Activated CD4-positive, alpha-beta T cell treated with anti-CD3 and anti-CD28 coated beads for 36 hours (primary cell): ENCODE measurements at regions of chr16 and their contacts with region 1.

Region 1: DNA sequence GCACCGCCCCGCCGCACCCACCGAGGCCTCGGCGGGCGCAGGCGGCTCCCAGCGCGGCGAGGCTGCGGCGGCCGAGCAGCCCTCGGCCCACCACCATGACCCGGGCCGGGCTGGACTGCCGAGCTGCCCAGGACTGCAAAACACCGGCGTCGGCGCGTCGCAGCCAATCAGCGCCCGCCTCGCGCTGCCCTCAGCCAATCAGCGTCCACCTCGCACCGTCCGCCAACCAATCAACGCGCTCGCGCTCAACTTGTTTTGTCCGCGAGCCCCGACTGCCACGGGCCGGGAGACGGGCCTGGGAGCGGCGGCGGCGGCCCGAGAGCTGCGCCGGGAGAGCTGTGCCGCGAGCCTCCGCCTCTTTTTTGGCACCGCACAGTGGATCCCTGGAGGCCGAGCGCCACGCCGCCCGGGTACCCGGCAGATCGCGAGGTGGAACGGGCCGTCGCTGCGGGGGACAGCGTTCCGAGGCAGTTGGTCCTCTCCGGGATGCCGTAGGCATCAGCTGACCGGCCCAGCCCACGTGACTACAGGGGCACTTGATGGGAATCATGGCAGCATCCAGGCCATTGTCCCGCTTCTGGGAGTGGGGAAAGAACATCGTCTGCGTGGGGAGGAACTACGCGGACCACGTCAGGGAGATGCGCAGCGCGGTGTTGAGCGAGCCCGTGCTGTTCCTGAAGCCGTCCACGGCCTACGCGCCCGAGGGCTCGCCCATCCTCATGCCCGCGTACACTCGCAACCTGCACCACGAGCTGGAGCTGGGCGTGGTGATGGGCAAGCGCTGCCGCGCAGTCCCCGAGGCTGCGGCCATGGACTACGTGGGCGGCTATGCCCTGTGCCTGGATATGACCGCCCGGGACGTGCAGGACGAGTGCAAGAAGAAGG is at the starts of genes FAHD1 and HAGH:
- DNase-seq: peak; percentile 93
- ATAC-seq: peak; percentile 90
- H3K4me3 Mint-ChIP-seq: peak within 1 kb of the TSS; percentile 91
- H3K27ac Mint-ChIP-seq: peak within 1 kb of the TSS; percentile 89
- H3K4me1 Mint-ChIP-seq: peaks cover 27% of the 10 kb centered on the region
- H3K27me3 Mint-ChIP-seq: no peaks in the 10 kb centered on the region
- total RNA-seq, gene FAHD1: 11.6 to 11.9 TPM
- total RNA-seq, gene HAGH: 20.9 to 25.0 TPM

Region 2: GRCh38 chr16:1474796-1475551 is 352.0 kb before region 1 on chr16 and contains the start of gene CLCN7:
- CTCF ChIA-PET with region 1: no interaction called
- POLR2A ChIA-PET with region 1: no interaction called
- intact Hi-C with region 1: loop called in 1 of 2 experiments (anchors 1 kb)
- DNase-seq: peak; percentile 95
- ATAC-seq: peak; percentile 91
- H3K4me3 Mint-ChIP-seq: peak within 1 kb of the TSS; percentile 73
- H3K27ac Mint-ChIP-seq: peak within 1 kb of the TSS; percentile 81
- H3K4me1 Mint-ChIP-seq: peaks cover 22% of the 10 kb centered on the region
- H3K27me3 Mint-ChIP-seq: no peaks in the 10 kb centered on the region
- total RNA-seq, gene CLCN7: 29.9 to 33.7 TPM

Region 3: DNA sequence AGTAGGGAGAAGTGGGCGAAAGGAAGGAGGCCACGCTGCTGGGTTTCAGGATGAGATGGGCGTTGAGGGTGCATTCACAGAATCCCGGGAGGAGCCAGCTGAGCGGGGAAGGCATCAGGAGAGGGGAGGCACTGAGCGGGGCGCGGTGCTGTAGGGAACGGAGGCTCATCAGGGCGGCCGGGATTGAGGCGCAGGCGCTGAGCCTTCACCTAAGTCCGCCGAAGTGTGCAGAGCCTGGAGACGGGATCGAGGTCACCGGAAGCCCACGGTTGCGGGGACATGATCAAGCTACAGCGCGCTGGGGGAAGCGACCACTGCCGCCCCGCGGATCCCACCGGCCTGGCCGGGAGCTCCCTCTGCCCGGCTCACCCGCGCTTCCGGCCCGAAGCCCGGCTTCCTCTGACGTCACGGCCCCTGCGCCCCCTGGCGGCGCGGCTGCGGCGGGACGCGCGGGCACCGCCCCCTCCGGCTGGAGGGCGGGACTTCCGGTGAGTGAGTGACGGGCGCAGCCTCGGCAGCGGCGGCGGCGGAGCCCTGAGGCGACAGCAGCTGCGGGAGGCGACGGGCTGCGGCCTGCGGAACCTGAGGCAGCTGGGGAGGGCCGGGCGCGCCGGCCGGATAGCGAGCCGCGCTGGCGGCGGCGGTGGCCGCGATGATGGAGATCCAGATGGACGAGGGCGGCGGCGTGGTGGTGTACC is 121.1 kb before region 1 on chr16 and contains the start of gene MAPK8IP3:
- CTCF ChIA-PET with region 1: no interaction called
- POLR2A ChIA-PET with region 1: no interaction called
- intact Hi-C with region 1: loop called in 1 of 2 experiments (anchors 1 kb)
- DNase-seq: peak; percentile 96
- ATAC-seq: peak; percentile 80
- H3K4me3 Mint-ChIP-seq: peak within 1 kb of the TSS; percentile 92
- H3K27ac Mint-ChIP-seq: peak within 1 kb of the TSS; percentile 90
- H3K4me1 Mint-ChIP-seq: peaks cover 32% of the 10 kb centered on the region
- H3K27me3 Mint-ChIP-seq: no peaks in the 10 kb centered on the region
- total RNA-seq, gene MAPK8IP3: 56.7 to 57.6 TPM

Region 4: DNA sequence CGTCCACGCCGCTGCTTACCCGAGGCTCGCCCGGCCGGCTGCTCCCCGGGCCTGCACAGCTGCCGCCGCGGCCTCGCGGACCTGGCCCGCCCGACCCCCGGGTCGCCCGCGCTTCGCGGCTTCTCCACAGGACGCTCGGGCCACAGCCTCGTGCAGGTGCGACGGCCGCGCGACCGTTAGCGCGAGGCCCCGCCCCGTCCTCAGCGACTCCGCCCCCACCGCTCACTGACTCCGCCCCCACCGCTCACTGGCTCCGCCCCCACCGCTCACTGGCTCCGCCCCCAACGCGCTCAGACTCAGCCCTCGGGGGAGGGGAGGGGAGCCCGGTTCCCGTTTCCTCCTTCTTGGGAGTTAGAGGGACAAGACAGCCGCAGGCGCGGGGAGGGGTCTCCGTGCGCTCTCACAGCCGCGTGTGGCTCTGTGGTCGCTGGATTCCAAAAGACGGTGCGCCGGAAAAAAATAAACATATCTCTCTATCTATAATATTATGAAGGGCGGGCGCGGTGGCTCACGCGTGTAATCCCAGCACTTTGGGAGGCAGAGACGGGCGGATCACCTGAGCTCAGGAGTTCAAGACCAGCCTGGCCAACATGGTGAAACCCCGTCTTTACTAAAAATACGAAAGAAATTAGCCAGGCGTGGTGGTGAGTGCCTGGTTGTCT is 45.2 kb after region 1 on chr16 and contains the start of gene MEIOB:
- CTCF ChIA-PET with region 1: no interaction called
- POLR2A ChIA-PET with region 1: no interaction called
- intact Hi-C with region 1: loop called in 1 of 2 experiments (anchors 1 kb)
- DNase-seq: peak; percentile 74
- ATAC-seq: peak; percentile 91
- H3K4me3 Mint-ChIP-seq: peak within 1 kb of the TSS; percentile 50
- H3K27ac Mint-ChIP-seq: no peak within 1 kb of the TSS
- H3K4me1 Mint-ChIP-seq: peaks cover 3% of the 10 kb centered on the region
- H3K27me3 Mint-ChIP-seq: peaks cover 17% of the 10 kb centered on the region
- total RNA-seq, gene MEIOB: 0.14 to 0.21 TPM

Region 5: GRCh38 chr16:1964506-1965395 is 137.8 kb after region 1 on chr16 and contains the start of gene RPS2:
- CTCF ChIA-PET with region 1: no interaction called
- POLR2A ChIA-PET with region 1: no interaction called
- intact Hi-C with region 1: loop called in 1 of 2 experiments (anchors 1 kb)
- DNase-seq: peak; percentile 100
- ATAC-seq: peak; percentile 81
- H3K4me3 Mint-ChIP-seq: peak within 1 kb of the TSS; percentile 96
- H3K27ac Mint-ChIP-seq: peak within 1 kb of the TSS; percentile 99
- H3K4me1 Mint-ChIP-seq: peaks cover 38% of the 10 kb centered on the region
- H3K27me3 Mint-ChIP-seq: no peaks in the 10 kb centered on the region
- total RNA-seq, gene RPS2: 5,351 to 6,287 TPM

Region 6: GRCh38 chr16:2016407-2016922 is 189.5 kb after region 1 on chr16:
- CTCF ChIA-PET with region 1: no interaction called
- POLR2A ChIA-PET with region 1: no interaction called
- intact Hi-C with region 1: no loop called
- DNase-seq: peak; percentile 48
- ATAC-seq: peak; percentile 42
- H3K4me3 Mint-ChIP-seq: no peak overlapping the region
- H3K27ac Mint-ChIP-seq: no peak overlapping the region
- H3K4me1 Mint-ChIP-seq: peaks cover 5% of the 10 kb centered on the region
- H3K27me3 Mint-ChIP-seq: peaks cover 14% of the 10 kb centered on the region